Gastrocnemius medialis (tissue), 4 donors: ENCODE measurements at regions of chr5 and their contacts with region 1.

Region 1: DNA sequence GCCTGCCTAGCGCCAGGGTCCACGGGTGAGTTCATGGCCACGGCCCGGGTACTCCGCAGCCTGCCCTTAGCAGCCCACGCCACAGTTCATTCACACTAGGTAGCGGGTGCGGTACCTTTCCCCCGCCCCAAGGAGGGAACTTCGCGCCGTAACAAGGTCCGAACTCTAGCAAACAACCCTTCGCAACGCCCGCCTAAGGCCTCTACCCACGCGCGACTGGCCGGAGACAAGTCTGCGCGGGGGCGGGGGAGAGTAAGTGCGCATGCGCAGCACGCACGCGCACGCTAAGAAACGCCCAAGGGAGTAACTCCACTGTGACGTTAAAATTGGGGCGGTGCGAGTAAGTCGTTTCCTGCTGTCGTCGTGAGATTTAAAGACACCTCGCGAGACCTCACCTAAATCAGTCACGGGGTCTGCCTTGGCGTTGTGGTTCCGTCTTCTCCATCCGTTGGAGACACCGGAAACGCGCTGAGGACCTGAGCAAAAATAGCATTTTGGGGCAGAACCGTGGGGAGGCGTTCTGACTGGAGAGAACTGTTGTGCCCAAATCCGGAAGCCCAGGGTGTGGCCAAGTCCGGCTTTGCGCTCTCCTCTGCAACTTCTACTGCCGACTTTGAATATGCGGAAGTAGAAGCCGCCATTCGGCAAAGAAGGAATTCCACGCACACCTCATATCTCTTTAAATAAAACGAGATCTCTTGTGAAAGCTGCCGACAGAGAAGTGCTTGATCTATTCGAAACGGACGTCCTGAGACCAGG is at the start of gene RAPGEF6:
- DNase-seq: peak; percentile 99
- ATAC-seq: peak; percentile 96 to 98
- H3K4me3 ChIP-seq: peak within 1 kb of the TSS; percentile 74 to 97 (median 82)
- H3K27ac ChIP-seq: peak within 1 kb of the TSS; percentile 96 to 99 (median 98)
- H3K4me1 ChIP-seq: peaks cover 32 to 45% of the 10 kb centered on the region in 2 donors
- H3K27me3 ChIP-seq: no peaks in the 10 kb centered on the region
- CTCF ChIP-seq: peak in 4 of 5 experiments; percentile 12 to 53 (median 36)
- POLR2A ChIP-seq: peak; percentile 87 to 93
- total RNA-seq, gene RAPGEF6: 7.2 to 11.7 (median 8.5) TPM

Region 2: DNA sequence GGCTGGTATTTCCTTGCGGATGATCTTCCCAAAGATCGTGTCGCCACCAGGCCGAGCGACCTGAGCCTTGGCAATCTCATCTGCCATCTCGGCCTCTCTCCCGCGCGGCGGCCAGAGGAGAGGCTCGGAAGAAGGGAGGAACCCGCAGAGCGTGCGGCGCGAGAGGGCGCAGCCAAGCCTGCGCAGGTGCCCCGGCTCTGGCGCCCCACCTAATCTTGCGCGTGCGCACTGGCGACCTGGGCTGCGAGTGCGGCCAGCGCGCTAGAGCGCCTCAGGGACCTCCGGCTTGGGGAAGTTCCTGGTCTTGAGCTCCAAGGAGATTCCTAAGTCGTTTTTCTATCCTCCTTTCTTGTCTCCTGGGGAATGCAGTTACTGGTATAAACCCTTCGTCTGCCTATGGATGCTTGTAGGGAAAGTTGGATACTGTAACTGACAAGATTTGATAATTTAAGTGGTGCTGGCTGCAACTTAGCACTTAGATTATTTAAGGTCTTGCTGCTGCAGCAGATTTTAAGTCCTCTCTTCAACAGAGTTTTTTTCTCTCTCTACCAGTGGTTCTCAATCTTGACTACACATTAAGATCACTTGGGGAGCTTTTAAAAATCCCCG is 470.0 kb before region 1 on chr5 and contains the start of gene HINT1:
- in situ Hi-C with region 1: loop called in 1 of 4 experiments (anchors 25 kb)
- intact Hi-C with region 1: no loop called
- DNase-seq: peak; percentile 83 to 89
- ATAC-seq: peak; percentile 86
- H3K4me3 ChIP-seq: peak within 1 kb of the TSS; percentile 68 to 88 (median 72)
- H3K27ac ChIP-seq: peak within 1 kb of the TSS; percentile 91 to 98 (median 94)
- H3K4me1 ChIP-seq: peaks cover 15 to 19% of the 10 kb centered on the region in 2 donors
- H3K27me3 ChIP-seq: no peaks in the 10 kb centered on the region
- CTCF ChIP-seq: no peak
- POLR2A ChIP-seq: peak; percentile 82
- total RNA-seq, gene HINT1: 177 to 325 (median 232) TPM

Region 3: DNA sequence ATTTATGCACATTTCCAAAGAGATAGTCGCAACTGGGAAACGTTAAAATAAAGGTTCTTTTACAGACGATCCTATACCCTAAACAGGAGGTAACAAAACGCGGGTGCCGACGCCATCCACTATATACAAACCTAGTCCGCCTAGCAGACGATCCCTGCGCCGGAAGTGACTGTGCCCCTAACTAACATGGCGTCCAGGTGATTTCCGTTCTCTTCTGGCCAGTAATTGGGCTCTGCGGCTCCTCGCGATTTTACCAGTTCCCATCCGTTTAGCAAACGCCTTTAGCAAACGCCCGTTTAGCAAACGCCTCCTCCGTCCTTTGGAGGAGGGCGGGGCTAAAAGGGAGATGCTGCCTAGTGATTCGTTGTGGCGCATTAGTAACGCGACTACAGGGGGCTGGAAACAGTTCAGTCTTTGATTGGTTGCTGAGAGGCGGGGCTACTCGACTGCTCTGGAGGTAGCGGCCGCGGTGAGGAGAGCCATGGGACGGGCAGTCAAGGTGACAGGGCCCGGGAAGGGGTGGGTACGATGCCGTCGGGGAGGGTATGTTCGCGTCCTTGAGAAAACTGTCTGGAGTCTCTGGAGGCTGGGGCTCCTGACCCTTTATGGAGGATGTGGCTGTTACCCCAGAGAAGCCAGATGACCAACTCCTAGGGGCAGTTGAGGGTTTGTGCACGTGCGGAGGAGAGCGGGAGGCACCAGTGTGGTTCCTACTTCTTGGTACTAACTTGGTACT is 464.5 kb before region 1 on chr5 and contains the start of gene LYRM7:
- in situ Hi-C with region 1: loop called in 1 of 4 experiments (anchors 25 kb)
- intact Hi-C with region 1: loop called (anchors 1 kb)
- DNase-seq: peak; percentile 97 to 98
- ATAC-seq: peak; percentile 99
- H3K4me3 ChIP-seq: peak within 1 kb of the TSS; percentile 59 to 83 (median 74)
- H3K27ac ChIP-seq: peak within 1 kb of the TSS; percentile 80 to 90 (median 84)
- H3K4me1 ChIP-seq: peaks cover 19 to 20% of the 10 kb centered on the region in 2 donors
- H3K27me3 ChIP-seq: no peaks in the 10 kb centered on the region
- CTCF ChIP-seq: no peak
- POLR2A ChIP-seq: peak; percentile 55 to 80
- total RNA-seq, gene LYRM7: 9.8 to 38.8 (median 14.7) TPM

Region 4: GRCh38 chr5:131589510-131590348 is 45.4 kb before region 1 on chr5:
- in situ Hi-C with region 1: no loop called
- intact Hi-C with region 1: loop called (anchors 1 kb)
- DNase-seq: no peak
- ATAC-seq: peak; percentile 45 to 61
- H3K4me3 ChIP-seq: no peak overlapping the region
- H3K27ac ChIP-seq: no peak overlapping the region
- H3K4me1 ChIP-seq: peaks cover 6 to 18% of the 10 kb centered on the region in 2 donors
- H3K27me3 ChIP-seq: no peaks in the 10 kb centered on the region
- CTCF ChIP-seq: peak; percentile 77 to 91 (median 84)
- POLR2A ChIP-seq: no peak

Region 5: GRCh38 chr5:131671994-131672655 is 37.0 kb after region 1 on chr5:
- in situ Hi-C with region 1: no loop called
- intact Hi-C with region 1: loop called (anchors 2 kb)
- DNase-seq: peak; percentile 43 to 50
- ATAC-seq: peak; percentile 88 to 93
- H3K4me3 ChIP-seq: peak overlapping the region in 2 of 4 donors; percentile 5 to 21
- H3K27ac ChIP-seq: peak overlapping the region; percentile 85 to 93 (median 88)
- H3K4me1 ChIP-seq: peaks cover 33 to 39% of the 10 kb centered on the region in 2 donors
- H3K27me3 ChIP-seq: no peaks in the 10 kb centered on the region
- CTCF ChIP-seq: no peak
- POLR2A ChIP-seq: no peak

Region 6: GRCh38 chr5:131796793-131797693 is 161.9 kb after region 1 on chr5 and contains the start of gene FNIP1:
- in situ Hi-C with region 1: loop called in 3 of 4 experiments (anchors 5 to 10 kb)
- intact Hi-C with region 1: loop called (anchors 1 kb)
- DNase-seq: peak; percentile 100
- ATAC-seq: peak; percentile 83 to 85
- H3K4me3 ChIP-seq: peak within 1 kb of the TSS; percentile 84 to 93 (median 90)
- H3K27ac ChIP-seq: peak within 1 kb of the TSS; percentile 99
- H3K4me1 ChIP-seq: peaks cover 39 to 45% of the 10 kb centered on the region in 2 donors
- H3K27me3 ChIP-seq: no peaks in the 10 kb centered on the region
- CTCF ChIP-seq: peak in 2 of 5 experiments; percentile 2 to 27
- POLR2A ChIP-seq: peak; percentile 100
- total RNA-seq, gene FNIP1: 53.9 to 84.7 (median 66.9) TPM

Region 7: GRCh38 chr5:132490486-132491367 is 855.6 kb after region 1 on chr5 and contains the start of gene IRF1:
- in situ Hi-C with region 1: no loop called
- intact Hi-C with region 1: loop called (anchors 10 kb)
- DNase-seq: peak; percentile 93 to 96
- ATAC-seq: peak; percentile 90 to 92
- H3K4me3 ChIP-seq: peak within 1 kb of the TSS; percentile 70 to 90 (median 84)
- H3K27ac ChIP-seq: peak within 1 kb of the TSS; percentile 86 to 95 (median 90)
- H3K4me1 ChIP-seq: peaks cover 36 to 40% of the 10 kb centered on the region in 2 donors
- H3K27me3 ChIP-seq: no peaks in the 10 kb centered on the region
- CTCF ChIP-seq: no peak
- POLR2A ChIP-seq: peak; percentile 96 to 97
- total RNA-seq, gene IRF1: 5.5 to 20.6 (median 8.4) TPM